ENCODE measurements at regions of chr12 and their contacts with region 1.

Region 1: DNA sequence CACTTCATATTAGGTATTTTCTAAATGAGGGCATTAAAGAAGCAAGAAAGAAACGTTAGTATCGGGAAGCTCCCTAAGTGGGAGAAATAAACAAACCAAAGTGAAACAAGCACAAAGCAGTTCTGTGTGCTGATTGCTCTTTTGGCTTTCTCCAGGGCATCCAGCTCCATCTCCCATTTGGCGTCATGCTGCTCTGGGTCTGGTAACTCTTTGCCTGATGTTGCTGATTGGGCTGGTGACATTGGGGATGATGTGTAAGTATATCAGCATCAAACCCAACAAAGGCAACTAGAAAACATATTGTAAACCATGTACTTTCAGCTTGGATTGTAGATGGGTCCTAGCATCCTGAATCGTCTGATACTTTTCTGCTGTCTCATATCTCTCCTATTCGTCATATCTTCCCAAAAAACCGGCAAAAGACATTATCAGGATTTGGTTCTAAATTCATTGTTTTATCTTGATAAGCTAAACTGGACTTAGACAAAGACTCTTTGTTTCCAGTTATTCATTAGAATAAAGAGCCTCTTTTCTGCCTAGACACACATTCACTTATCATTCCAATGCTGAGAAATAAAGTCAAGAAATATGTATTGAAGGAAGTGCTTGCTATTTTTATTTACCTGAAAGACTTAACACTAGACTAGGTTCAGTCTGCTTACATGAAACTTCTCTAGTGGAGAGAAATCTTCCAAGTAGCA is 2.4 kb downstream of the CLEC12B start:
- DNase-seq: no peak
- H3K4me3 ChIP-seq: no peak overlapping the region
- H3K27ac ChIP-seq: no peak overlapping the region
- H3K4me1 ChIP-seq: peaks cover 6% of the 10 kb centered on the region
- H3K27me3 ChIP-seq: no peaks in the 10 kb centered on the region
- CTCF ChIP-seq: no peak

Region 2: GRCh38 chr12:9906873-9907272 is 105.9 kb before region 1 on chr12:
- CTCF ChIA-PET with region 1: no interaction called
- dilution Hi-C with region 1: no loop called
- in situ Hi-C with region 1: no loop called
- intact Hi-C with region 1: no loop called
- DNase-seq: peak; percentile 8
- H3K4me3 ChIP-seq: no peak overlapping the region
- H3K27ac ChIP-seq: no peak overlapping the region
- H3K4me1 ChIP-seq: no peaks in the 10 kb centered on the region
- H3K27me3 ChIP-seq: no peaks in the 10 kb centered on the region
- CTCF ChIP-seq: no peak

Region 3: DNA sequence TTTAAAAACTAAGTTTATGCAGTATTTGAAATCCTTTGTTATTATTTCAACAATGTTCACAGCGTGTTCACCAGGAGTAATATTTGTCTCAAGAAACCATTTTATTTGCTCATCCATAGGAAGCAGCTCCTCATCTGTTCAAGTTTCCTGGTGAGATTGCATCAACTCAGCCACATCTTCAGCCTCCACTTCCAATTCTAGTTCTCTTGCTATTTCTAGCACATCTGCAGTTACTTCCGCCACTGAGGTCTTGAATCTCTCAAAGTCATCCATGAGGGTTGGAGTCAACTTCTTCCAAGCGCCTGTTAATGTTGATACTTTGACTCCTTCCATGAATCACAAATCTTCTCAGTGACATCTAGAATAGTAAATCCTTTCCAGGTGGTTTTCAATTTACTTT is 35.7 kb after region 1 on chr12:
- CTCF ChIA-PET with region 1: no interaction called
- dilution Hi-C with region 1: no loop called
- in situ Hi-C with region 1: no loop called
- intact Hi-C with region 1: no loop called
- DNase-seq: no peak
- H3K4me3 ChIP-seq: no peak overlapping the region
- H3K27ac ChIP-seq: no peak overlapping the region
- H3K4me1 ChIP-seq: no peaks in the 10 kb centered on the region
- H3K27me3 ChIP-seq: peaks cover 7% of the 10 kb centered on the region
- CTCF ChIP-seq: no peak

Region 4: DNA sequence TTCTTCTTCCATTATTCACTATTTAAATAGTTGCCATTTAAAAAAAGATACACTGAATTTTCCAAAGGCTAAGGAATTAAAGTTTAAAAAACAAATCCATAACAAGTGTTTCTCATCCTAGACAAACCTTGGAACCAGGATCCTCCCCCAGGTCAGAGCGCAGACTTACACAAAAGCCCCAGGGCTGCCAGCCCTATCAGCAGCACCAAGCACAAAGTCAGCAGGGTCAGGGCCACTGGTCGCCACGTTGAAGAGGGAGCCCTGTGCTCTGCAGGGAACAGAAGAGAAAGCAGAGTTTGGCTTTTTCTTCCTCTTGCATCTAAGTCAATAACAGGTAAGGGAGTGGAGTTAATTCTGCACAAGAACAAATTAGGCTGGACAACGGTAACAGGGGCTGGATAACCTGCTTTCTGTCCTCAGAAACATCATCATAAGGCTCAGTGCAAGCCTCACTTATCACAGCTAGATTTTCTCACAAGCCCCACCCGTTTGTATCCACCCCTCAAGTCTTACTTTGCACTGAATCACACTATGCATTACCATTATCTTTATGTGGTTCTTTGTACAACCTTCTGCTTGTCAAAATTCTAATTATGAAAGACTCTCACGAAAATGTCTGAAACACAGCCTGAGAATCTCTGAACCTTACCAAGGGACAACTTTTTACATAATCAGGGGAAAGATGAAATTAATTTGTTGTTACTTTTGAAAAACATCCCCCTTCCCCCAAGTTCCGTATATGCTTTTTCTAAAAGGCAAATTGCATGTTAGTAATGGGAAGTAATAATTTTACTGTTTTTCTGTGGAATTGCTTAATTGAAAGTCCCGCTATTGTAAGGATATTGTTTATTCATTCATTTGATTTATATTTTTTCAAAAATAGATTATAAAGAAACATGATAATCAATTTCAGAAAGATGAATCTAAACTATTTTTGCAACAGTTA is 76.4 kb after region 1 on chr12:
- CTCF ChIA-PET with region 1: no interaction called
- dilution Hi-C with region 1: no loop called
- in situ Hi-C with region 1: no loop called
- intact Hi-C with region 1: no loop called
- DNase-seq: no peak
- H3K4me3 ChIP-seq: no peak overlapping the region
- H3K27ac ChIP-seq: no peak overlapping the region
- H3K4me1 ChIP-seq: no peaks in the 10 kb centered on the region
- H3K27me3 ChIP-seq: no peaks in the 10 kb centered on the region
- CTCF ChIP-seq: no peak

Region 5: DNA sequence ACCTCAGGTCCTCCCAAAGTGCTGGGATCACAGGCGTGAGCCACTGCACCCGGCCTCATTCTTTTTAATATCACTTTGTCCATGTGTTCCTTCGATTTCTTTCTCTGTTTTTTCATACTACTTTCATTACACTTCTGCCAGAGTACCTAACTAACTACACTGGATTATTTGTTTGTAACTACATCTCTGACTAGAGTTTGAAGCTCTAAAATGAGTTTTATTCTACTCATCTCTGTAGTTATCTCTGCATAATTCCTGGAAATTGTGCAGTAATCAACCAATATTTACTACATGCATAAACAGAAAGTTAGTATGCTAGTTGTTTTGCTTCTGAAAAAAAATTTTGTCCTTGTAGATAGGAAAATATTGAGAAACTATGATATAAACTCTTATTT is 361.8 kb after region 1 on chr12:
- CTCF ChIA-PET with region 1: interaction called, 16 read pairs
- dilution Hi-C with region 1: no loop called
- in situ Hi-C with region 1: no loop called
- intact Hi-C with region 1: no loop called
- DNase-seq: no peak
- H3K4me3 ChIP-seq: no peak overlapping the region
- H3K27ac ChIP-seq: no peak overlapping the region
- H3K4me1 ChIP-seq: peaks cover 18% of the 10 kb centered on the region
- H3K27me3 ChIP-seq: no peaks in the 10 kb centered on the region
- CTCF ChIP-seq: no peak